Activated CD4-positive, alpha-beta memory T cell treated with anti-CD3 and anti-CD28 coated beads for 36 hours (primary cell): ENCODE measurements at regions of chr1 and their contacts with region 1.

Region 1: GRCh38 chr1:50422946-50423669 is at the start of gene DMRTA2:
- DNase-seq: no peak
- H3K4me3 Mint-ChIP-seq: peak within 1 kb of the TSS; percentile 73
- H3K27ac Mint-ChIP-seq: no peak within 1 kb of the TSS
- H3K4me1 Mint-ChIP-seq: peaks cover 57% of the 10 kb centered on the region
- H3K27me3 Mint-ChIP-seq: peaks cover 82% of the 10 kb centered on the region
- total RNA-seq, gene DMRTA2: not detected

Region 2: DNA sequence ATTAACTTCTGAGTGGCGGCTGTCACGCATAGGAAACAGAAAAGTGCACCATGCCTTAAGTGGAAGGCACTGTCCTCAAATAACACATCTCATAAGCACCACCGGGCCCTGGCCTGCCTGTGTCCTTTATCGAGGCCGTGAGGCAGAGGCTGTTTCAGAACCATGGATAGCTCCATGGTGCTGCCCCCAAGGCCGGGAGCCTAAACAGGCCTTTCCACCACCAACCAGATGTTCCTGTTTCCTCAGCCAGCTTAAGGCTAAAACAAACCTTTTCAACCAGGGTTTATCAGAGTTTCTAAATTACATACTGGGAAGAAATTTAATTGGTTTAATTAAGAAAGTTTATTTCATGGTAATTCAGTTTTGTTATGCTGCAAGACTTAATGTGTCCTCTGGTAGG is 114.2 kb before region 1 on chr1:
- CTCF ChIA-PET with region 1: no interaction called
- POLR2A ChIA-PET with region 1: no interaction called
- intact Hi-C with region 1: no loop called
- DNase-seq: peak; percentile 22
- H3K4me3 Mint-ChIP-seq: no peak overlapping the region
- H3K27ac Mint-ChIP-seq: no peak overlapping the region
- H3K4me1 Mint-ChIP-seq: no peaks in the 10 kb centered on the region
- H3K27me3 Mint-ChIP-seq: no peaks in the 10 kb centered on the region

Region 3: DNA sequence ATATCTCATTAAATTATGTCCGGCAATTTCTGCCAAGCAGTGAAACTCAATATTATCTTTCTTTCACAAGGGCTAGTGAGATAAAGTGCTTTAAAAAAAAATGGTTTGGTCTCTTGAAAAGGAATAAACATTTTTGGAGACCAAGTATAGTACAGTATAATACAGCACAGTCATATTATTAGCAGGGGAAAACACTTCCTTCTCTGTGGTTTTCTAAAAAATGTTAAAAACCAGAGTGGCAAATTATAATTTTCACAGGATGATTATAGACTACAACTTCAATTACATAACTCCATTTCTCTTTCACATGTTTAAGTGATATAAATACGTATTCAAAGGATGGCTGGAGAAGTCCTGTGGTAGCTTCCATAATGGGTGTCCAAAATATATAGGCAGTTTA is 170.4 kb after region 1 on chr1:
- CTCF ChIA-PET with region 1: no interaction called
- POLR2A ChIA-PET with region 1: no interaction called
- intact Hi-C with region 1: no loop called
- DNase-seq: no peak
- H3K4me3 Mint-ChIP-seq: no peak overlapping the region
- H3K27ac Mint-ChIP-seq: no peak overlapping the region
- H3K4me1 Mint-ChIP-seq: no peaks in the 10 kb centered on the region
- H3K27me3 Mint-ChIP-seq: no peaks in the 10 kb centered on the region

Region 4: GRCh38 chr1:50704126-50704525 is 281.0 kb after region 1 on chr1:
- CTCF ChIA-PET with region 1: no interaction called
- POLR2A ChIA-PET with region 1: no interaction called
- intact Hi-C with region 1: loop called (anchors 10 kb)
- DNase-seq: no peak
- H3K4me3 Mint-ChIP-seq: no peak overlapping the region
- H3K27ac Mint-ChIP-seq: no peak overlapping the region
- H3K4me1 Mint-ChIP-seq: no peaks in the 10 kb centered on the region
- H3K27me3 Mint-ChIP-seq: no peaks in the 10 kb centered on the region